Right cardiac atrium (tissue), 5 donors: ENCODE measurements at regions of chr13 and their contacts with region 1.

Region 1: GRCh38 chr13:98842864-98843481 is 90.5 kb upstream of the SLC15A1 start:
- DNase-seq: peak; percentile 65 to 86 (median 83)
- ATAC-seq: peak; percentile 84 to 85
- H3K4me3 ChIP-seq: no peak overlapping the region
- H3K27ac ChIP-seq: no peak overlapping the region
- H3K4me1 ChIP-seq: no peaks in the 10 kb centered on the region
- H3K27me3 ChIP-seq: no peaks in the 10 kb centered on the region

Region 2: GRCh38 chr13:98672944-98673545 is 169.9 kb before region 1 on chr13:
- intact Hi-C with region 1: loop called in 1 of 4 experiments (anchors 10 kb)
- DNase-seq: peak; percentile 75 to 85 (median 83)
- ATAC-seq: peak; percentile 90 to 95
- H3K4me3 ChIP-seq: no peak overlapping the region
- H3K27ac ChIP-seq: no peak overlapping the region
- H3K4me1 ChIP-seq: peaks cover 2% of the 10 kb centered on the region
- H3K27me3 ChIP-seq: no peaks in the 10 kb centered on the region

Region 3: DNA sequence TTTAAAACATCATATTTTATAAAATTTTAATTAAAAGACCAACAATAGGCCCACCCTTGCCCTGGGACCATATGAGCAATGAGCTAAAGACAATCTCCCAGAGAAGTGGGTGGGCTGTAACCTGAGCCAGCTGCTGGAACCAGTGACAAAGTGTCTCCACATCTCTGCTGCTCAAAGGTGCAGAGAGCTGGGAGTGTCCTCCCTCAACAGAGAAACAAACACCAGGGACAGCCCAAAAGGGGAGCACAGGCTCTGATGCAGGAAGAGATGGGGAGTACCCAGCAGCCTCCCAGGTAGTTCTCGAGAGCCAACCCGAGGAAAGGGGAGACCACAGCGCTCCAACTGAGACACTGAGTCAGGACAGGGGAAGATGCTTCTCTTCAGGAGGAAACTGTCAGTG is 95.8 kb after region 1 on chr13:
- intact Hi-C with region 1: no loop called
- DNase-seq: no peak
- ATAC-seq: peak in 1 of 2 donors; percentile 19
- H3K4me3 ChIP-seq: no peak overlapping the region
- H3K27ac ChIP-seq: peak overlapping the region; percentile 36
- H3K4me1 ChIP-seq: peaks cover 14% of the 10 kb centered on the region
- H3K27me3 ChIP-seq: no peaks in the 10 kb centered on the region